HCT116 (cell line): ENCODE measurements at regions of chr12 and their contacts with region 1.

Region 1: DNA sequence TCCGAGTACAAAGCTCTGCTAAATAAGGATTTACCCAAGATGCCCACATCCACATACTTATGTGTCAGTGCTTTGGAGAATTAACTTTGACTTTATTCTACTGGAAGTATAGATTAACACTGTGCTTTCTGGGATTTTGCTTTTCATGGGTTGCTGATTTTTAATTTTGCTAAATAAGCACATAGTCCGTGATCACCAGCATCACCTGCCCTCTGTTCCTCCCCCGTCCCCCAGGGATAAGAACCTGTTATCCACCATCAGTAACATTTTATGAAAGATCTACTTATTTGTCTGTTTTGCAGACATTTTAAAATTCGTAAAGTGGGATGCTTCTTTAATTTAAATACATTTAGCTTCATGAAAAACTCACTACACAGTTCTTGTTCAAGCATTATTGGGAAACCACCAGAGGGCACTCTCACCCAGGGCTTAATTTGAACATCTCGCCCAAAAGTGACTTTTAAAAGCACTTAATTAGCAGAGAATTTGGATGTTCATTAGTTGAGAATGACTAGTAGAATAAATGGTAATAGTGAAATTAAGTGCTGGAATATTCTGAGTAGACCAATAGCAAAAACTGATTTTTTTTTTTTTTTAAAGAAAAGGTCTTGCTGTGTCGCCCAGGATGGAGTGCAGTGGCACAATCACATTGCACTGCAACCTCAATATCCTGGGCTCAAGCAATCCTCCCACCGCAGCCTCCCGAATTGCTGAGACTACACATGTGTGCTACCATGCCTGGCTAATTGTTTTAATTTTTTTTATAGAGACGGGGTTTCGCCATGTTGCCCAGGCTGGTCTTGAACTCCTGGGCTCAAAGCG is 35.7 kb downstream of the MRPL42 start:
- DNase-seq: peak; percentile 21
- ATAC-seq: no peak
- H3K4me3 ChIP-seq: no peak overlapping the region
- H3K27ac ChIP-seq: no peak overlapping the region
- H3K4me1 ChIP-seq: 0 out of 4 replicates have a peak, but pooled peaks cover 0 to 4% of the 10 kb centered on the region in 2 experiments
- H3K27me3 ChIP-seq: no peaks in the 10 kb centered on the region
- CTCF ChIP-seq: peak; percentile 71 to 88 (median 76); a peak in 5 of 6 replicates
- POLR2A ChIP-seq: no peak
- RAD21 ChIP-seq: peak; percentile 78

Region 2: DNA sequence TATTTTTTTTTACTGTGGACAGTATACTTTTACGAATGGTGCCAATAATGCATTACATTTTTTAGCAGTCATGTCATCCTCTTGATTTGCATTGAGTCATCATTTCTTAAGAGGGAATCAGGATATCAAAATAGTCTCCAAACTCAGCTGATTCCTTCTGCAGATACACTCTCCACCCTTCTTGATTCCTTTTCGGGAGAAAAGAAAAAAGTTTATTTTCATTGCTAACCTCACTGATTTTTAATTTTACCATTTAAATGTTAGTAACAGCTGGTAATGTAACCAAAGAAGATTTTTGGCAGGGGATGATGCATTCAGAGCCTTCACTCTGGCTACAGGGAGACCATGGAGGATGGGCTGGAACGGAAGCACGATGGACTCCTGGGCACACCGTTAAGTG is 11.8 kb after region 1 on chr12:
- CTCF ChIA-PET with region 1: interaction called, 24 read pairs
- POLR2A ChIA-PET with region 1: interaction called, 5 read pairs
- RAD21 ChIA-PET with region 1: no interaction called
- intact Hi-C with region 1: no loop called
- DNase-seq: no peak
- ATAC-seq: no peak
- H3K4me3 ChIP-seq: no peak overlapping the region
- H3K27ac ChIP-seq: no peak overlapping the region
- H3K4me1 ChIP-seq: peaks cover 0 to 11% of the 10 kb centered on the region in 2 experiments; a peak in 2 of 4 replicates
- H3K27me3 ChIP-seq: no peaks in the 10 kb centered on the region
- CTCF ChIP-seq: no peak
- POLR2A ChIP-seq: no peak
- RAD21 ChIP-seq: no peak

Region 3: GRCh38 chr12:93742110-93742934 is 239.3 kb after region 1 on chr12:
- CTCF ChIA-PET with region 1: interaction called, 4 read pairs
- POLR2A ChIA-PET with region 1: no interaction called
- RAD21 ChIA-PET with region 1: no interaction called
- intact Hi-C with region 1: loop called (anchors 2 kb)
- DNase-seq: peak; percentile 29
- ATAC-seq: peak; percentile 97
- H3K4me3 ChIP-seq: peak overlapping the region; percentile 64
- H3K27ac ChIP-seq: peak overlapping the region; percentile 41
- H3K4me1 ChIP-seq: peaks cover 7 to 26% of the 10 kb centered on the region in 2 experiments; a peak in 3 of 4 replicates
- H3K27me3 ChIP-seq: no peaks in the 10 kb centered on the region
- CTCF ChIP-seq: peak; percentile 11 to 36 (median 13); a peak in 3 of 6 replicates
- POLR2A ChIP-seq: no peak
- RAD21 ChIP-seq: peak; percentile 63

Region 4: DNA sequence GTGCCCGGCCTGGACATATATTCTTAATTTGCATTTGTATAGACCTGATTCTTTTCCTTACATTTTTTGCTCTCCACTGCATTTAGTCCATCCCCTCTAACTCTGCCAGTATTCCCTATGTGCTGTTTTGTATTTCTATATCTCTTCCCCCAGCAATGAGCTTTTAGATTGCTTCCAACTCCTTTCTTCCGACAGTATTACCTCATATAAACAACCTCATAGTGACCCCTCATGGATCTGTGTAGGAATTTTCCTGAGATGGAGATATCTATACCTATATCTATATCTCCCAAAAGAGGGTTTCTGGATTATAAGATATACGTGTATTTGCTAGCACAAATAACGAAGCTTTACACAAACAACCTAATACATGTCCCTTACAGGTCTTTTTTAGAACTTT is 336.1 kb after region 1 on chr12:
- CTCF ChIA-PET with region 1: interaction called, 3 read pairs
- POLR2A ChIA-PET with region 1: no interaction called
- RAD21 ChIA-PET with region 1: interaction called in 1 of 2 experiments, 4 read pairs
- intact Hi-C with region 1: loop called (anchors 5 kb)
- DNase-seq: no peak
- ATAC-seq: peak; percentile 65
- H3K4me3 ChIP-seq: no peak overlapping the region
- H3K27ac ChIP-seq: no peak overlapping the region
- H3K4me1 ChIP-seq: peaks cover 0 to 6% of the 10 kb centered on the region in 2 experiments; a peak in 1 of 4 replicates
- H3K27me3 ChIP-seq: no peaks in the 10 kb centered on the region
- CTCF ChIP-seq: peak in 2 of 3 experiments; percentile 21 to 28; a peak in 3 of 6 replicates
- POLR2A ChIP-seq: no peak
- RAD21 ChIP-seq: peak; percentile 57

Region 5: GRCh38 chr12:94074980-94075928 is 572.2 kb after region 1 on chr12:
- CTCF ChIA-PET with region 1: interaction called, 23 read pairs
- POLR2A ChIA-PET with region 1: no interaction called
- RAD21 ChIA-PET with region 1: no interaction called
- intact Hi-C with region 1: no loop called
- DNase-seq: peak; percentile 34
- ATAC-seq: peak; percentile 91
- H3K4me3 ChIP-seq: no peak overlapping the region
- H3K27ac ChIP-seq: no peak overlapping the region
- H3K4me1 ChIP-seq: 0 out of 4 replicates have a peak, but pooled peaks cover 0 to 3% of the 10 kb centered on the region in 2 experiments
- H3K27me3 ChIP-seq: no peaks in the 10 kb centered on the region
- CTCF ChIP-seq: peak; percentile 44 to 73 (median 65); a peak in 5 of 6 replicates
- POLR2A ChIP-seq: no peak
- RAD21 ChIP-seq: peak; percentile 64